ENCODE measurements at regions of chr10 and their contacts with region 1.

Region 1: DNA sequence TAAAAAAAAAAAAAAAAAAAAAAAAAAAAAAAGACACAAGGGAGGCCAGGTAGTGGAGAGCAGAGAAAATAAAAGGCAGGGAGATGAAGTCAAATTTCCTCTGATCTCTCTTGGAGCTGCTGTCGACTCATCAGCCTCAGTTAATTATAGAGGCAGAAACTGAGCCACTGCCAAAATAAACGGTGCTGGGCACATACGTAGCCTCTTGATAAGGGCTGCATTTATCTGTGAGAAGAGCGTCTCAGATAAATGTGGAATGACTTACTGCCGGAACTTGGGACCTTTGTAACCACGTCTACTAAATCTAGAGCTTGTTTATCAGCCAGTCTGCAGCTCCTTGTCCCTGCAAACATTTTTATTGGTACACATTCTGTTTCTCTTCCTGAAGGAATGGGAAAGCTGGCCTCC is 162.3 kb downstream of the BAMBI start:
- DNase-seq: no peak
- ATAC-seq: no peak
- H3K4me3 ChIP-seq: no peak overlapping the region
- H3K27ac ChIP-seq: no peak overlapping the region
- H3K4me1 ChIP-seq: no peaks in the 10 kb centered on the region
- H3K27me3 ChIP-seq: no peaks in the 10 kb centered on the region; the same call in 1 of the 2 replicates
- CTCF ChIP-seq: no peak

Region 2: GRCh38 chr10:28853195-28853594 is 13.6 kb after region 1 on chr10:
- CTCF ChIA-PET with region 1: no interaction called
- POLR2A ChIA-PET with region 1: interaction called, 21 read pairs
- in situ Hi-C with region 1: no loop called
- intact Hi-C with region 1: no loop called
- DNase-seq: no peak
- ATAC-seq: no peak
- H3K4me3 ChIP-seq: no peak overlapping the region
- H3K27ac ChIP-seq: no peak overlapping the region
- H3K4me1 ChIP-seq: no peaks in the 10 kb centered on the region
- H3K27me3 ChIP-seq: no peaks in the 10 kb centered on the region
- CTCF ChIP-seq: no peak

Region 3: DNA sequence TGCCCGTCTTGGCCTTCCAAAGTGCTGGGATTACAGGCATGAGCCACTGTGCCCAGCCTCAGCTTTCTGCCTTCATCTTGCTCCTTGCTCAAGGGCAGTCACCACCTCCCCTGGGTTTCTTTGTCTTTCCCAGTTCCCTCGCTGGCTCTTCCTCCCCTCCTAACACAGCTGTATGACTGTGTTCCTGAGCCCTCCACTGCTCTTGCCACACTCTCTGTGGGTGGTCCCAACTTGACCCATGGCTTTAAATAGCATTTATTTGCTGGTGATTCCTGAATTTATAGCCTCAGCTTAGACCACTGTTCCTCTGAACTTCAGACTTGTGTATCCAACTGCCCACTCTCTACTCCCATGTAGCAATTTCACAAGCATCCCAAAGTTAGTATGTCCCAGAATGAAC is 19.0 kb after region 1 on chr10:
- CTCF ChIA-PET with region 1: interaction called, 11 read pairs
- POLR2A ChIA-PET with region 1: interaction called, 17 read pairs
- in situ Hi-C with region 1: no loop called
- intact Hi-C with region 1: no loop called
- DNase-seq: no peak
- ATAC-seq: no peak
- H3K4me3 ChIP-seq: no peak overlapping the region
- H3K27ac ChIP-seq: no peak overlapping the region
- H3K4me1 ChIP-seq: no peaks in the 10 kb centered on the region
- H3K27me3 ChIP-seq: no peaks in the 10 kb centered on the region
- CTCF ChIP-seq: no peak

Region 4: GRCh38 chr10:29443745-29444523 is 604.3 kb after region 1 on chr10:
- CTCF ChIA-PET with region 1: no interaction called
- POLR2A ChIA-PET with region 1: no interaction called
- in situ Hi-C with region 1: no loop called
- intact Hi-C with region 1: no loop called
- DNase-seq: no peak
- ATAC-seq: no peak
- H3K4me3 ChIP-seq: no peak overlapping the region
- H3K27ac ChIP-seq: no peak overlapping the region
- H3K4me1 ChIP-seq: no peaks in the 10 kb centered on the region
- H3K27me3 ChIP-seq: no peaks in the 10 kb centered on the region
- CTCF ChIP-seq: no peak